Posterior cingulate gyrus (tissue), 11 donors: ENCODE measurements at regions of chr9 and their contacts with region 1.

Region 1: DNA sequence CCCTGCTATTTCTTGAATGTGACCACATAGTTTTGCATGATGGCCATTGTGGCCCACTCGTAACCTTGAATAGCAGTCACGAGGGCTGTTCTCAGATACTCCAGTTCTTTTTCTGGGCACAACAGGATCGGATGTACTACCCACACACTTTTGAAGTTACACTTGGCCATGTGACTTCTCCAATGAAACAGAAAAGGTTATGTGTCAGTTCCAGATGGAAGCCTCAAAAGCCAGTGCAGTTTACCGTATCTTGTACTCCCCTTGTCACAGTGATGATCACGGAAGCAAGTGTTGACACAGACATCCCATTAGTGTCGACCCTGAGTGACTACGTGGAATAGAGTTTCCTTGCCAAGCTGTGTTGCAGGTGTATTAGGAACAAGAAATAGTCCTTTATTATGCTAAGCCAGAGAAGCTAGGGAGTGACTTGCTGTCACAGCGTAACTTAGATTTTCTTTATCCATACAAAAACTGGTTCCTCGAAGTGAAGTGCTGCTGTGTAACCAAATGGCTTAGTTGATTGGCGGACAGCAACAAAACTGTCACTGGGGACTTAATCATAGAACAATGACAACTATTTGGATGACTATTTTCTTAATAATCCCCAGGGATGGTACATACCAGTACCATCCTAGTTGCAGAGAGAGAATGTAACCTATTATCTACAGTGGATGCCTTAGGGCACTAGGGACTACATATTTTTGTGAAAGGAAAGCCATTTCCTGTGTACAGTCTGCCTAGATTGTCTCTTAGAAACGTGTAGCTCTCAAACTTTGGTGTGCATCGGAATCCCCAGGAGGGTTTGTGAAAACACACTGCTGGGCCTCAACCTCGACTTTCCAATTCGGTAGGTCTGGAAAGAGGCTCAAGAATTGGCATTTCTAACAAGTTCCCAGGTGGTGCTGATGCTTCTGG is 90.1 kb upstream of the DMRT1 start:
- DNase-seq: no peak

Region 2: DNA sequence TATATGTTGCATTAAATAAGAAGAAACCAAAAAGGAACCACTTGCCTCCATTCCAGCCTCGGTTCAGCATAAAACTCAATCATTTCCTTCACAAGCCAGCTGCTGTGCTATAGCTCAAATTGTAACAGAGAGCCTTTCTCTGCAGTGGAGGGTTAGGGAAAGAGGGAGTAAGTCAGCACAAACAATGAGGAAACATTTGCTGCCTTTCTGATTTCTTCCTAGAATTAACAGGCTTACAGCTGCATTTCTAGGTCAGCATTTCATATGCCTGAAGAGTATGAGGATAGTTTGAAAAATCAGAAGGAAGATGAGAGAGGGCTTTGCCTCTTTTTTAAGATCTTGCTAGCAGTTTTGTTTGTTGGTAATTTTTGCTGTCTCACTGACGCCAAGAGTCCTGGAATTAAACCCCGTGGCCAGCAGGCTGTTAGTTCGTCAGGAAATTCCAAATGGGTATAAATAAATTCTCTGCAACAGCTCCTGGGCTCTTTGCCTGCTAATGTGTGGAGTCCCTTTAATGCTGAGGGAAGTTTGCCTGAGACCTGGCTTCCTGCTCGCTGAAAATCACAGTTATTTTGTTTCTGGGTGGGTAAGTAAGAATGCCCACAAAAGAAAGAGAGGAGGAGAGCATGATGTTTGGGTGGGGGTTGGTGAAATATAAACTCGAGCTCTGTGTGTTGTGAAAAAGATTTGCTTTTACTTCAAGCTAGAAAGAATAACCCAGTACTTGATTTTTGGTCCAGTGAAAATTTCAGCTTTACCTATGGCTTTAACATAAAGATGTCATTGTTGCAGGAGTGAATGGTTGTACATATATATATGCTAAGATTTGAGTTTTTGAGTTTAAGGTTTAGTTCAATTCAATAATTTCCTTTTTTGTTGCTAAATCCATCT is 57.9 kb before region 1 on chr9:
- intact Hi-C with region 1: loop called (anchors 5 kb)
- DNase-seq: peak in 1 of 10 donors; percentile 41